Right cardiac atrium (tissue), 5 donors: ENCODE measurements at regions of chr1 and their contacts with region 1.

Region 1: GRCh38 chr1:202888531-202889360 is at the start of gene RABIF:
- DNase-seq: peak; percentile 97 to 99 (median 99)
- ATAC-seq: peak; percentile 98 to 99
- H3K4me3 ChIP-seq: peak within 1 kb of the TSS; percentile 89
- H3K27ac ChIP-seq: peak within 1 kb of the TSS; percentile 93
- H3K4me1 ChIP-seq: no peaks in the 10 kb centered on the region
- H3K27me3 ChIP-seq: no peaks in the 10 kb centered on the region
- total RNA-seq, gene RABIF: 5.4 to 6.5 (median 5.7) TPM

Region 2: DNA sequence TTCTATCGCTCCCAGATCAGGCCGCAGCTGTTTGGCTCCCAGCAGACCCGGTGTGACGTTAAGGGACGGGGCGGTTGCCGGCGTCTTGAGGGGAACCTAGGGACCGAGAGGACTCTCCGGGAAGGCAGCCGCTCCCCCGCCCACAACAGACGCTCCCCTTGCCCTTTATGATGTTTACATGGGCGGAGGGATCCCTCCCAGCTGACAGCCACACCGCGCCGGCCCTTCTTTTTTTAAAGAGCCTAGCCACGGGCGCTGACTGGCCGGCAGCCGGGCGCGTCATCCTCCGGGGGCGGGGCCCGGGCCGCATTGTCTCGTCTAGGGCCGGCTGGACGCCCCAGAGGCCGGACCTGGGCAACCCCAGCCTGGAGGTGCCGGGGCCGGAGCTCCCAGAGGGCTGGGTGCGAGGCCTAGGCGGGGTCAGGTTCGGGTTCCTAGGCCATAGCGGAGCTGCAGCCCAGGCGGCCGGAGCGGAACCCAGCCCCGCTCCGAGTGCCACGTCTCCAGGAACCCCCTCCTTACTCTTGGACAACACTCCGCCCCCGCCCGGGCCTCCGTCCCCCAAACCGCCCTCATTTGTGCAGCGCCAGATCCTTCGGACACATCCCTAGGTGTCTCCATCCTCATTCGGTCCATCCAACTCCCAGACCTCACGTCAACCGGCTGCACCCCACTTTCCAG is 78.0 kb before region 1 on chr1 and contains the start of gene PCAT6:
- intact Hi-C with region 1: loop called in 2 of 4 experiments (anchors 5 kb)
- DNase-seq: peak; percentile 95 to 98 (median 97)
- ATAC-seq: peak; percentile 95 to 96
- H3K4me3 ChIP-seq: peak within 1 kb of the TSS; percentile 67
- H3K27ac ChIP-seq: peak within 1 kb of the TSS; percentile 85
- H3K4me1 ChIP-seq: peaks cover 2% of the 10 kb centered on the region
- H3K27me3 ChIP-seq: no peaks in the 10 kb centered on the region
- total RNA-seq, gene PCAT6: 0.79 to 1.6 (median 1.2) TPM in 3 of 4 donors, not detected in the other